ENCODE measurements at regions of chr2 and their contacts with region 1.

Region 1: DNA sequence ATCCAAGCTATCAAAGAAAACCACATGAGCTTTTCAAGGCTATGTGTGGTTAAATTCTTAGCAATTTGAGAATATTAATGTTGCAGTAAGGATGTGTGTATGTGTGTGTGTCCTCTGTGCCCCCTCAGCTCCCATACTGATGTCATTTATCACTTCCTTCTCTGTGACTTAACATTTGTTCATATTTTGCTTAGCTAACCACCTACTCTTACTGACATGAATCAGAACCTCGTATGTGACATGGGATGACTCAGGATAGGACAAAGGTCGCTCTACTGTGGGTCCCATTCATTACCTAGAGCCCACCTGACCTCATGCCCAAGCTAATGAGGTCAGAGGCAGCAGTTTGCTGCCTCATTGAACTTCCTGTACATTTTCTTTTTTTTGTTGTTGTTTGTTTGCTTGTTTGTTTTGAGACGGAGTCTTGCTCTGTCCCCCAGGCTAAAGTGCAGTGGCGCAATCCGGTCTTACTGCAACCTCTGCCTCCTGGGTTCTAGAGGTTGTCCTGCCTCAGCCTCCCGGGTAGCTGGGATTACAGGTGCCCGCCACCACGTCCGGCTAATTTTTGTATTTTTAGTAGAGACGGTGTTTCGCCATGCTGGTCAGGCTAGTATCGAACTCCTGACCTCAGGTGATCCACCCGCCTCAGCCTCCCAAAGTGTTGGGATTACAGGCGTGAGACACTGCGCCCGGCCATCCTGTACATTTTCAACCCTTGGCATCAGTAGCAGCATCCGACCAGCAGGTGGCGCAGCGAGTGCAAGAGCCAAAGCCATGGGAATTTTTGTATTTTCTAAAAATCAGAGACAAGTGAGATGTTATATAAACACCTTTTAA is 36.4 kb downstream of the MOGAT1 start:
- DNase-seq: peak; percentile 82 to 87
- ATAC-seq: peak; percentile 58 to 85 (median 64)
- H3K4me3 ChIP-seq: peak overlapping the region; percentile 53
- H3K27ac ChIP-seq: peak overlapping the region; percentile 88
- H3K4me1 ChIP-seq: peaks cover 3% of the 10 kb centered on the region
- H3K27me3 ChIP-seq: no peaks in the 10 kb centered on the region
- CTCF ChIP-seq: peak; percentile 97

Region 2: GRCh38 chr2:222722327-222722946 is 14.5 kb after region 1 on chr2:
- intact Hi-C with region 1: no loop called
- DNase-seq: no peak
- ATAC-seq: no peak
- H3K4me3 ChIP-seq: no peak overlapping the region
- H3K27ac ChIP-seq: no peak overlapping the region
- H3K4me1 ChIP-seq: no peaks in the 10 kb centered on the region
- H3K27me3 ChIP-seq: no peaks in the 10 kb centered on the region
- CTCF ChIP-seq: no peak

Region 3: GRCh38 chr2:222860740-222861410 is 153.0 kb after region 1 on chr2 and contains the start of gene ACSL3:
- intact Hi-C with region 1: loop called (anchors 2 to 5 kb)
- DNase-seq: peak; percentile 97 to 98
- ATAC-seq: peak; percentile 94 to 98 (median 96)
- H3K4me3 ChIP-seq: peak within 1 kb of the TSS; percentile 99
- H3K27ac ChIP-seq: peak within 1 kb of the TSS; percentile 99
- H3K4me1 ChIP-seq: peaks cover 45% of the 10 kb centered on the region
- H3K27me3 ChIP-seq: no peaks in the 10 kb centered on the region
- CTCF ChIP-seq: peak; percentile 12
- total RNA-seq, gene ACSL3: 25.3 to 136 (median 46.4) TPM

Measured in psoas muscle (tissue), 8 donors.